GM23248 (cell line): ENCODE measurements at regions of chr10 and their contacts with region 1.

Region 1: GRCh38 chr10:33330543-33331378 is 3.7 kb downstream of the NRP1 start:
- DNase-seq: peak; percentile 85
- H3K4me3 ChIP-seq: peak overlapping the region; percentile 94
- H3K27ac ChIP-seq: peak overlapping the region; percentile 86
- H3K4me1 ChIP-seq: peaks cover 52% of the 10 kb centered on the region
- H3K27me3 ChIP-seq: no peaks in the 10 kb centered on the region

Region 2: DNA sequence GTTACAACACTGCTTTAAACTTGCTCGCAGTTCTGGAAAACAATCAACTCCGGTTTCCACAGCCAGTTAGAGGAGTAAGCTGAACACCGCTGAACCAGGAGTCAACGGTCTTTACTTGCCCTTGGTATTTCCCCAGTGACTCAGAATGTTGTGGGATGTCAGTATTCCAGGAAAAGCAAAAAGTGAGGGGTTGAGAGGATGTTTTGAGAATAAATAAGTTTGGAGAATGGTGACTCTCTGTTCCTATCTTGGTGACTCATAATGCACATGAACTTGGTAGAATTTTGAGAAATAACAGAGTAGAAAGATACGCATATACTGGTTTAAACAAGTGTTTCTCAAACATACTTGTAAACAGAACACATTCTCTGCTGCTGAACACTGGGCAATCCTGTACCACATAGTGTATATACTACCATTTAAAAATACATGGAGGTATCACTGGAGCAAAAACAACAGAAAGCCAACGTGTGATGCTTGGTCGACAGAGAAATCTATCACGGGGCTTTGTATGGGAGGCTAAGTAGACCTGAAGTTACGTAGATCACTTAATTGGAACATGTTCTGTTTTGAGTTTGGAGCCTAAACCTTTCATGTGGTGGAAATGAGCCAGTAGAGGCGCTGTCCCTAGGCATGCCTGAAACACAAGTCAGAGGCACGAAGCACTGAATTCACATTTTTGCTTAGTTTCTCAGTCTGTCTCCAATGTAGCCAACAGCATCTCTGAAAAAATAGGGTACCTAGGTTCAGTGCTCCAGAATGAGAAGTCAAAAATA is 950.0 kb after region 1 on chr10:
- in situ Hi-C with region 1: loop called (anchors 25 kb)
- DNase-seq: peak; percentile 95
- H3K4me3 ChIP-seq: peak overlapping the region; percentile 61
- H3K27ac ChIP-seq: peak overlapping the region; percentile 68
- H3K4me1 ChIP-seq: peaks cover 29% of the 10 kb centered on the region
- H3K27me3 ChIP-seq: no peaks in the 10 kb centered on the region

Region 3: DNA sequence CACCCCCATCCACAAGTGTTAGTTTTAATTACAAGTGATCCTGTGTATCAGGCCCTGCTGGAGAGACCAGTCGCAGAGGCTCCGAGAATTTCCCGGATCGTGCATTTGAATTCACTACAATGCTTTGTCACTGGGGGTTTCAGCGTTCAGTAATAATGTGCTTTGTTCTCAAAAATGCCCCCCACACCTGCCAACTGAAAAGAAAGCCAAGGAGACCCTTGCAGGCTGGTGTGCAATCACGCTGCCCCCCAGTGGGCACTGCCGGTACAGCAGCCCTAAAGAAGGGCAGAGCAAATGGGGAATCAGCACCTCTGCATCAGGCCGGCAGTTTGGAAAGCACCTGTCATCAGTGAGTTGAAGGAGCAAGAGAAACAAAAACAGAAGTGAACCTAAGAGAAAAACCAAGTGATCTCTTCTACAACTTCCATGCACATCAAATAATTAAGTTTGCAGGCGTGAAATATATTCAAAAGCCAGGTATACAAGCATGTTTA is 1306.7 kb after region 1 on chr10:
- in situ Hi-C with region 1: loop called (anchors 10 kb)
- DNase-seq: peak; percentile 46
- H3K4me3 ChIP-seq: no peak overlapping the region
- H3K27ac ChIP-seq: no peak overlapping the region
- H3K4me1 ChIP-seq: peaks cover 6% of the 10 kb centered on the region; the same call in 1 of the 2 replicates
- H3K27me3 ChIP-seq: no peaks in the 10 kb centered on the region